Naive thymus-derived CD4-positive, alpha-beta T cell (primary cell): ENCODE measurements at regions of chr2 and their contacts with region 1.

Region 1: DNA sequence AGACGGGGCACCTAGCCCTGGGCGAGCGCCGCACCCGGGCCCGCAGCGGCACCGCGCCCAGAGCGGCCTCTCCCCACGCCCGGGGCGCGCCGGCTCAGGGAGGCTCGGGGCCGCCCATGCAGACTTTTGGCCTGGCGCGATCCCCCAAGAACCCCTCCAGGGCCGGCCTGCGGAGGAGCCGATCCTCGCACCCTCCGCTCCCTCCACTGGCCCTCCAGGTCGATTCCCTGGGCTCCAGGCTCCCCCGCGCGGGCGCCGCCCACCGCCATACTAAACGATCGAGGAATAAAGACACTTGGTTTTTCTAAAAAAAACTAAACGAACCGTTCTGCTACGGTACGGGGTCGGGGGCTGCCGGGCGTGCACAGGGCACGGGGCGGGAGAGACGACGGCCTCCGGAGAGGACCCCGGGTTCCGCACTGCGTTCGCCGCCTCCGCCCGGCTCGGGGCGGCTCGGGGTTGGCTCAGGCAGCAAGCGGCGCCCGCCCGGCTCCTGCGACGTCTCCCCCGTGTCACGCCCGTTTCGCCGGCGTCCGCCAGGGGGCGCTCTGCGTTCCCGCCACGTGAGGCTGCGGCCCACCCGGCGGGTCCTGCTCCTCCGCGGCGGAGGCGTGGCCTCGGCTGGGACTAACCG is 365 bp upstream of the KHK start:
- DNase-seq: peak; percentile 94 to 100 (median 99)
- ATAC-seq: peak; percentile 96
- H3K4me3 ChIP-seq: peak overlapping the region; percentile 68
- H3K4me3 Mint-ChIP-seq: peak overlapping the region; percentile 75 to 91 (median 86)
- H3K27ac ChIP-seq: peak overlapping the region; percentile 90
- H3K27ac Mint-ChIP-seq: peak overlapping the region; percentile 30 to 91 (median 78)
- H3K4me1 ChIP-seq: peaks cover 18 to 22% of the 10 kb centered on the region in 2 donors
- H3K4me1 Mint-ChIP-seq: peaks cover 13 to 47% (median 29%) of the 10 kb centered on the region in 7 donors
- H3K27me3 ChIP-seq: no peaks in the 10 kb centered on the region
- H3K27me3 Mint-ChIP-seq: no peaks in the 10 kb centered on the region

Region 2: DNA sequence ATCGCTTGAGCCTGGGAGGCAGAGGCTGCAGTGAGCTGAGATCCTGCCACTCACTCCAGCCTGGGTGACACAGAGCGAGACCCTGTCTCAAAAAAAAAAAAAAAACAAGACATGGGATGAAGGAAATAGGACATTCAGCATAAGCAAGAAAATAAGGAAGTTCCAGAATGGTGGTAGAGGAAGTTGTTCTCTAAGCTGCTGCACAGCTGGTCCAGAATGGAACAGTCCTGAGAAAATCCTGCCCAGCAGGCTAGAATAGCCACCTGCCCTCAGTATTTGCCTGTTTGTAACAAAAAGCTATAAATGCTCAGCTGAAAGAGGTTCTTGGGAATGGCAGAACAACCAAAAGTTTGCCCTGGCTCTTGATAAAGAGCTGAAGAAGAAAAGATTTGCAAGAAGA is 126.9 kb before region 1 on chr2:
- CTCF ChIA-PET with region 1: interaction called, 4 read pairs
- POLR2A ChIA-PET with region 1: no interaction called
- intact Hi-C with region 1: loop called (anchors 1 to 2 kb)
- DNase-seq: no peak
- ATAC-seq: no peak
- H3K4me3 ChIP-seq: no peak overlapping the region
- H3K4me3 Mint-ChIP-seq: no peak overlapping the region
- H3K27ac ChIP-seq: no peak overlapping the region
- H3K27ac Mint-ChIP-seq: peak overlapping the region in 1 of 9 donors; percentile 14
- H3K4me1 ChIP-seq: no peaks in the 10 kb centered on the region
- H3K4me1 Mint-ChIP-seq: peaks cover 0 to 8% (median 0%) of the 10 kb centered on the region in 7 donors
- H3K27me3 ChIP-seq: no peaks in the 10 kb centered on the region
- H3K27me3 Mint-ChIP-seq: peaks cover 9 to 52% (median 35%) of the 10 kb centered on the region in 5 donors

Region 3: GRCh38 chr2:27071277-27071989 is 14.8 kb before region 1 on chr2 and contains the start of gene OST4:
- CTCF ChIA-PET with region 1: interaction called, 6 read pairs
- POLR2A ChIA-PET with region 1: interaction called, 134 read pairs
- intact Hi-C with region 1: loop called (anchors 1 kb)
- DNase-seq: peak; percentile 81 to 97 (median 87)
- ATAC-seq: peak; percentile 96
- H3K4me3 ChIP-seq: peak within 1 kb of the TSS; percentile 83
- H3K4me3 Mint-ChIP-seq: peak within 1 kb of the TSS; percentile 96 to 99 (median 97)
- H3K27ac ChIP-seq: peak within 1 kb of the TSS; percentile 97
- H3K27ac Mint-ChIP-seq: peak within 1 kb of the TSS; percentile 93 to 98 (median 97)
- H3K4me1 ChIP-seq: peaks cover 29 to 41% of the 10 kb centered on the region in 2 donors
- H3K4me1 Mint-ChIP-seq: peaks cover 57 to 86% (median 76%) of the 10 kb centered on the region in 7 donors
- H3K27me3 ChIP-seq: no peaks in the 10 kb centered on the region
- H3K27me3 Mint-ChIP-seq: no peaks in the 10 kb centered on the region
- total RNA-seq, gene OST4: 241 to 398 (median 263) TPM

Region 4: GRCh38 chr2:27191053-27191829 is 105.0 kb after region 1 on chr2:
- CTCF ChIA-PET with region 1: no interaction called
- POLR2A ChIA-PET with region 1: no interaction called
- intact Hi-C with region 1: loop called in 1 of 2 experiments (anchors 1 kb)
- DNase-seq: peak in 7 of 9 donors; percentile 28 to 60 (median 51)
- ATAC-seq: peak; percentile 85
- H3K4me3 ChIP-seq: no peak overlapping the region
- H3K4me3 Mint-ChIP-seq: no peak overlapping the region
- H3K27ac ChIP-seq: no peak overlapping the region
- H3K27ac Mint-ChIP-seq: no peak overlapping the region
- H3K4me1 ChIP-seq: no peaks in the 10 kb centered on the region
- H3K4me1 Mint-ChIP-seq: peaks cover 0 to 2% (median 0%) of the 10 kb centered on the region in 7 donors
- H3K27me3 ChIP-seq: no peaks in the 10 kb centered on the region
- H3K27me3 Mint-ChIP-seq: peaks cover 0 to 15% (median 4%) of the 10 kb centered on the region in 5 donors

Region 5: DNA sequence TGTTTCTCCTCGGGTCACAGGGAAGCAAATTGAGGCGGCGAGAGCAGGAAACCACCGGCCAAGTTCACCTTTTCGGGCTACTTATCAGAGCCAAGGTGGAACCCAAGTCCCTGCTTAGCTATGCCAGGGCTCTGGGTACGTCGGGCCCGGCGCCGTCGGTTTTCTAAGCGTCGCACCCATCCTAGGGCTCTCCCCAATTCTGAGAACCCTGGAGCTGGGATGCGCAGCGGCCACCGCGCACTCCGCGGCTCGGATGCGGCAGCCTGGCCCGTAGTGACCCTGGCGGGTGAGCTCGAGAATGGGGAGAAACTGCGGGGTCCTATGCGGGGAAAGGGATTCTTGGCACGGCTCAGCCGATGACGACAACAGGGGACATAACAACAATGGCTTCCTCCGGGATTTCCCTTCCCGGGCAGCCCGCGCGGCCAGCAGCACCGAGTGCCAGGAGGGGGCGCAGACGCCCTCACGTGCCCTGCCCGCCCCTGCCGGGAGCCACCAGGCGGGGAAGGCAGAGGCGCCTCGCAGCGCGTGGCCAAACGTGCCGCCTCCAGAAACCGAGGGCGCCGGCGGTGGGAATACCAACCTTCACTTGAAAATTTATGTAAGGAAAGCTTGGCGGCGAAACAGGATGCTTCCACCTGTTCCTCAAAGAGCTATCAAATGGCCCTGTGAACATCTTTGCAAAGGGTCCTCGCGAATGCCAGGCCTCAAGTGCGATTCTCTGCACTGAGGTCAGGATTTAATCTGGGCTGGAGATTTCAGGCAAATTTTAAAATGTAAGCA is 178.7 kb after region 1 on chr2:
- CTCF ChIA-PET with region 1: no interaction called
- POLR2A ChIA-PET with region 1: interaction called, 3 read pairs
- intact Hi-C with region 1: loop called in 1 of 2 experiments (anchors 5 kb)
- DNase-seq: peak in 8 of 9 donors; percentile 39 to 63 (median 46)
- ATAC-seq: peak; percentile 85
- H3K4me3 ChIP-seq: peak overlapping the region; percentile 59
- H3K4me3 Mint-ChIP-seq: peak overlapping the region in 9 of 10 donors; percentile 59 to 97 (median 85)
- H3K27ac ChIP-seq: no peak overlapping the region
- H3K27ac Mint-ChIP-seq: peak overlapping the region in 2 of 9 donors; percentile 2 to 38
- H3K4me1 ChIP-seq: peaks cover 8 to 23% of the 10 kb centered on the region in 2 donors
- H3K4me1 Mint-ChIP-seq: peaks cover 23 to 33% (median 29%) of the 10 kb centered on the region in 7 donors
- H3K27me3 ChIP-seq: peaks cover 6 to 18% of the 10 kb centered on the region in 2 donors
- H3K27me3 Mint-ChIP-seq: peaks cover 34 to 47% (median 40%) of the 10 kb centered on the region in 5 donors

Region 6: DNA sequence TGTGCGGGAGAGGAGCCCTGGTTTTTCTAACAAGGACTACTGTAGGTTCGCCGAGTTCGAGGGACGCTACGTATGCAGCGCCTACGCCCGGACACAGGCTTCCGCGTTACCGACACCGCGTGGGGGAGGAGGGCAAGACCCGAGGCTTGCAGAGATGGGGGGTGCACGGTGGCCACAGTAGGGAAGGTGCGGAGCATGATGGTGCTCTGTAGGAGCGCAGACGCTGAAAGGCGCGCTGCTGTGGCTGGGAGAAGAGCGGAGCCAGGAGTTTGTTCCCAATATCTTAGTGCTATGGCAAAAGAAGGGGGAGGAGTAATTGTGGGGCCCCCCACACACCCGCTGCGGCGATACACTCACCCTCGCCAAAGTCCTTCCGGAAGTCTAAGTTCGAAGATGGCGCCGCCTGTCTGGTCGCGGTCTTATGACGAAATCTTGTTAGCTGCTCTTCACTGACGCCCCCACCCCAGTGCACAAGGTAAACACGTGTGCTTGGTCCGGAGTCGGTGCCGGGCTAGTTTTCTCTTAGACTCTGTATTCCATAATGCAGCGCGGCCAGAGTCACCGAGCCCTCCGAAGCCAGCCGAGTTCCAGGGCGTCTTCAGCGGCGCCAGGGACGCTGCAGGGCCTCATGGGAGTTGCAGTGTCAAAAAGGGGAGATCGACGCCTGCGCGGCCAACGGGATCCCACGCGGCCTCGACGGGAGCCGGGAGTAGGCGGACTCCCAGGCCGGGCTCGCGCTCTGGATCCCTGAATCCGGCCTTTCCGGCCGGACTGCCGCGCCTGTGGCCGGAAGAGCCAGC is 270.4 kb after region 1 on chr2 and contains the start of gene GTF3C2:
- CTCF ChIA-PET with region 1: no interaction called
- POLR2A ChIA-PET with region 1: interaction called, 3 read pairs
- intact Hi-C with region 1: loop called in 1 of 2 experiments (anchors 1 kb)
- DNase-seq: peak; percentile 76 to 94 (median 92)
- ATAC-seq: peak; percentile 85
- H3K4me3 ChIP-seq: peak within 1 kb of the TSS; percentile 96
- H3K4me3 Mint-ChIP-seq: peak within 1 kb of the TSS; percentile 95 to 100 (median 98)
- H3K27ac ChIP-seq: peak within 1 kb of the TSS; percentile 91
- H3K27ac Mint-ChIP-seq: peak within 1 kb of the TSS; percentile 96 to 100 (median 99)
- H3K4me1 ChIP-seq: peaks cover 24 to 34% of the 10 kb centered on the region in 2 donors
- H3K4me1 Mint-ChIP-seq: peaks cover 38 to 63% (median 56%) of the 10 kb centered on the region in 7 donors
- H3K27me3 ChIP-seq: no peaks in the 10 kb centered on the region
- H3K27me3 Mint-ChIP-seq: no peaks in the 10 kb centered on the region
- total RNA-seq, gene GTF3C2: 68.0 to 106 (median 78.3) TPM